GM12878 (cell line): ENCODE measurements at regions of chr1 and their contacts with region 1.

Region 1: GRCh38 chr1:27662707-27663393 is 9.1 kb downstream of the IFI6 start:
- DNase-seq: peak; percentile 78
- ATAC-seq: peak; percentile 65
- H3K4me3 ChIP-seq: peak overlapping the region; percentile 3; the same call in 1 of the 2 replicates
- H3K27ac ChIP-seq: peak overlapping the region; percentile 90
- H3K4me1 ChIP-seq: peaks cover 43% of the 10 kb centered on the region
- H3K27me3 ChIP-seq: no peaks in the 10 kb centered on the region
- CTCF ChIP-seq: peak; percentile 83 to 85 (median 85)
- EP300 ChIP-seq: no peak
- POLR2A ChIP-seq: peak; percentile 73
- RAD21 ChIP-seq: peak; percentile 97

Region 2: DNA sequence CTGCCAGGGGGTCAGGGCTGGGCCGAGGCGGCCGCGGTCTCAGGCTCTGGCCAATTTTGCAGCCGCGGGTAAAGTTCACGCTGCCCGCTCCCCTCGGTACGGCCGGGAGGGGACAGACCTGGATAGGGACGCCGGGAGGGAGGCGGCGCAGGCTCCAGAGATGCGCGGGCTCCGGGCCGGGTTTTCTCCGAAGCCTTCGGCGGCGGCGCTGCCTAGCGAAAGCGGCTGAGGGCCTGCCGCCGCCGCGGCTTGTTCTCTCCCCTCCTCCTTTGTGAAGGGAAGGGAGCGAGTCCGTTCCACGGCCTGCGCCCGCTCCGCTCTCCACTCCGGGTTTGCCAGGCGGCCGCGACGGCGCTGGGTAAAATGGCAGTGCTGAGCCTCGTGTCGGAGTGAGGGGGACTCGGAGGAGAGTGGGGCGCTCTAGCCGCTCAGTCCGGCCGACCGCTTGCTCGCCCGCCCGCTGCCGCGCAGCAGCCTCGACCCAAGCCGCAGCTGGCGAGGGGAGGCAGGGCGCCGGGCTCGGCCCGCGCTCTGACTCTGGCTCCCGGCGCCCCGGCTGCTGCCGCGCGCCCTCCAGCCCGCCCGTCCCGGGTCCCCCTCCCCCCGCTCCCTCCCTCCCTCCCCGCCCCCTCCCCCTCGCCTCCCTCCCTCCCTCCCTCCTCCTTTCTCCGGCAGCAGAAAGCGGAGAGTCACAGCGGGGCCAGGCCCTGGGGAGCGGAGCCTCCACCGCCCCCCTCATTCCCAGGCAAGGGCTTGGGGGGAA is 967.3 kb before region 1 on chr1 and contains the start of gene ARID1A:
- CTCF ChIA-PET with region 1: no interaction called
- POLR2A ChIA-PET with region 1: interaction called, 14 read pairs
- RAD21 ChIA-PET with region 1: no interaction called
- SMC1A ChIA-PET with region 1: no interaction called
- in situ Hi-C with region 1: no loop called
- intact Hi-C with region 1: no loop called
- DNase-seq: peak; percentile 82
- ATAC-seq: peak; percentile 69
- H3K4me3 ChIP-seq: peak within 1 kb of the TSS; percentile 98
- H3K27ac ChIP-seq: peak within 1 kb of the TSS; percentile 98
- H3K4me1 ChIP-seq: peaks cover 13% of the 10 kb centered on the region
- H3K27me3 ChIP-seq: no peaks in the 10 kb centered on the region
- CTCF ChIP-seq: no peak
- EP300 ChIP-seq: peak in 1 of 2 experiments; percentile 74; a peak in 1 of 4 replicates
- POLR2A ChIP-seq: peak; percentile 97
- RAD21 ChIP-seq: peak; percentile 27; the same call in 1 of the 2 replicates
- polyA plus RNA-seq, gene ARID1A: 10.0 to 24.5 TPM

Region 3: DNA sequence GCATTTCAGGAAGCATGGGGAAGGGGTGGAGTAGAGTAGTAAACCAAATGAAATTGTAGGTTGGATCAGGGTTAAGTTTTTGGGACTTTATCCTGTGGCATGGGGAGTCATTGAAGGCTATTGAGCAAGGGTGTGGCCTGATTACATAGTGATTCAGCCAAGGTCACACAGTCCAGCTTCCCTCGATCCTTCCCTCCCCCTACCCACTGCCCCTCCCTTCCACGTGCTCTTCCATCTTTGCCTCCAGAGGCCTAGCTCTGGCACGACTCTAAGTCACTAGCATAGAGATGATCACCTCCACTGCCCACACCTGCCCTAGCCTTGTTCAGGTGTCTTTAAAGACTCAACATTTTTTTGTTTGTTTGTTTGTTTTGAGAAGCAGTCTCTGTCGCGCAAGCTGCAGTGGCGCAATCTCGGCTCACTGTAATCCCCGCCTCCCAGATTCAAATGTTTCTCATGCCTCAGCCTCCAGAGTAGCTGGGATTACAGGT is 470.8 kb before region 1 on chr1:
- CTCF ChIA-PET with region 1: no interaction called
- POLR2A ChIA-PET with region 1: no interaction called
- RAD21 ChIA-PET with region 1: no interaction called
- SMC1A ChIA-PET with region 1: no interaction called
- in situ Hi-C with region 1: no loop called
- intact Hi-C with region 1: no loop called
- DNase-seq: no peak
- ATAC-seq: no peak
- H3K4me3 ChIP-seq: no peak overlapping the region
- H3K27ac ChIP-seq: no peak overlapping the region
- H3K4me1 ChIP-seq: no peaks in the 10 kb centered on the region
- H3K27me3 ChIP-seq: no peaks in the 10 kb centered on the region; a peak in 1 of 4 replicates
- CTCF ChIP-seq: no peak
- EP300 ChIP-seq: no peak
- POLR2A ChIP-seq: no peak
- RAD21 ChIP-seq: no peak

Region 4: DNA sequence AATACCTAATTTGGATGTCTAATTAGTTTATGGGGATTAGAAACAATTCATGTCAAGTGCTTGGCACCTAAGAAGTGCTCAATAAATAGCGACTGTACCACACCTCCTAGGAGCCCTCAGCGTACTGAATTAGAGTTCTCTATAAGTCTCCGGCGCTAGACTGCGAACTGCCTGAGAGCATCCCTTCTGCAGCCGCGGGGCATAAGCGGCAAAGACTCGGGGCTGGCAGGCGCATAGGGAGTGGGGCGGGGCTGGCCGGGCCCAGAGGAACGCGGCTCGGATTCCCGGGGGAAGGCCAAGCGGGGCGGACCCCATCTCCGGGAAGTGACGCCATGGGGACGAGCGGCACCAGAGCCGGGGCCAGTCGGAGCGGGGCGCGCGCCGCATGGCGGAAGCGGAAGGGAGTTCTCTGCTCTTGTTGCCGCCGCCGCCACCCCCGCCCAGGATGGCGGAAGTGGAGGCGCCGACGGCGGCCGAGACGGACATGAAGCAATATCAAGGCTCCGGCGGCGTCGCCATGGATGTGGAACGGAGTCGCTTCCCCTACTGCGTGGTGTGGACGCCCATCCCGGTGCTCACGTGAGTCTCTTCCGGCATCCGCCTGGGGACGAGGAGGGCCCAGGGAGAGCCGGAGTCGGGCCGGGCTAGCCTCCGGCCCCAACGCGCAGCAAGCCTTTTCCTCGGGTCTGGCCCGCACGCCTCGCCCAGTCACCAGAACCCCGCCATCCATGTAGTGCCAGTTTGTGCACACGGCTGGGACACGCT is 340.9 kb before region 1 on chr1 and contains the start of gene TMEM222:
- CTCF ChIA-PET with region 1: no interaction called
- POLR2A ChIA-PET with region 1: interaction called, 3 read pairs
- RAD21 ChIA-PET with region 1: no interaction called
- SMC1A ChIA-PET with region 1: no interaction called
- in situ Hi-C with region 1: no loop called
- intact Hi-C with region 1: loop called (anchors 10 kb)
- DNase-seq: peak; percentile 76
- ATAC-seq: peak; percentile 98
- H3K4me3 ChIP-seq: peak within 1 kb of the TSS; percentile 95
- H3K27ac ChIP-seq: peak within 1 kb of the TSS; percentile 96
- H3K4me1 ChIP-seq: no peaks in the 10 kb centered on the region
- H3K27me3 ChIP-seq: no peaks in the 10 kb centered on the region
- CTCF ChIP-seq: no peak
- EP300 ChIP-seq: peak in 1 of 2 experiments; percentile 63; a peak in 2 of 4 replicates
- POLR2A ChIP-seq: peak; percentile 93
- RAD21 ChIP-seq: no peak
- polyA plus RNA-seq, gene TMEM222: 3.8 to 7.8 TPM

Region 5: DNA sequence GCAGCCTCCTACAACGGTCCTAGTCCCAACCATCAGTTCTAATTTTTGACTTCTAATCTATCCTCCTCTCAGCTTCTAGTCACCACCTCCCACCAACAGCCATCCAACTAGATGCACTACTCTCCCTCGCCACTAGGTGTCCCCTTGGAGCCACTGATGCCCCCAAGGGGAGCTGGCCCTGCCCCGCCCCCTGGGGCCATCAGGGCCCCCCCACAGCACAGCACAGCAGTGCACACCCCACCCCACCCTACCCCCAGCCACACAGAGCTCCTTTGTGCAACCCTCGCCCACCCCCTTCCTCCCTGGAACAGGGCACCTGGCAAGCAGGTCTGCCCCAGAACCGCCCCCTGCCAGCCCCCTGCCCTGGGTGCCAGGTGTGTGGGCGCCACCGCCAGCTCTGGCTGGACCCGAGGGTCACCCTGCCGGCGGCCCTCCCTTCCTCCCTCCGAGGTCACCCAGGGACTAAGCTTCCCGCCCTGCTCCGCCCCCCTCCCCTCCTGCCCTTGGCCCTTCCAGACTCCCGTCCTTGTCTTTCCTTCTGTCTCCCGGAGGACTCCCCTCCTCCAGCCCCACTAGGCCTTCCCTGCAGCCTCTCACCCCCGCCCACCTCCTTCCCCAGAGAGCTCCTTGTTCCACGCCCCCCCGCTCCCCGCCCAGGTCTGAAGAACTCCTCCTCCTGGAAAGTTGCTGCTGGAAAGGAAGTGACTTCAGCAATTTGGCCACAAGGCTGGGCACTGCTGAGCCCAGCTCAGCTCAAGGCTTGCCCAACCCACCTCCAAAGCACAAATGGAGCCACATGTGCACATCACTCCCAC is 105.9 kb before region 1 on chr1:
- CTCF ChIA-PET with region 1: interaction called, 14 read pairs
- POLR2A ChIA-PET with region 1: interaction called, 10 read pairs
- RAD21 ChIA-PET with region 1: interaction called, 16 read pairs
- SMC1A ChIA-PET with region 1: interaction called, 10 read pairs
- in situ Hi-C with region 1: loop called (anchors 5 kb)
- intact Hi-C with region 1: loop called (anchors 2 kb)
- DNase-seq: no peak
- ATAC-seq: peak; percentile 92
- H3K4me3 ChIP-seq: no peak overlapping the region
- H3K27ac ChIP-seq: no peak overlapping the region
- H3K4me1 ChIP-seq: peaks cover 16% of the 10 kb centered on the region
- H3K27me3 ChIP-seq: no peaks in the 10 kb centered on the region
- CTCF ChIP-seq: peak; percentile 85 to 96 (median 86)
- EP300 ChIP-seq: no peak
- POLR2A ChIP-seq: no peak
- RAD21 ChIP-seq: peak; percentile 85

Region 6: GRCh38 chr1:27624467-27625178 is 38.2 kb before region 1 on chr1:
- CTCF ChIA-PET with region 1: interaction called, 97 read pairs
- POLR2A ChIA-PET with region 1: interaction called, 141 read pairs
- RAD21 ChIA-PET with region 1: interaction called, 211 read pairs
- SMC1A ChIA-PET with region 1: interaction called, 88 read pairs
- in situ Hi-C with region 1: no loop called
- intact Hi-C with region 1: no loop called
- DNase-seq: peak; percentile 67
- ATAC-seq: peak; percentile 31
- H3K4me3 ChIP-seq: peak overlapping the region; percentile 93
- H3K27ac ChIP-seq: peak overlapping the region; percentile 85
- H3K4me1 ChIP-seq: peaks cover 63% of the 10 kb centered on the region
- H3K27me3 ChIP-seq: no peaks in the 10 kb centered on the region
- CTCF ChIP-seq: no peak
- EP300 ChIP-seq: no peak
- POLR2A ChIP-seq: no peak
- RAD21 ChIP-seq: no peak

Region 7: GRCh38 chr1:27650539-27651175 is 12.2 kb before region 1 on chr1:
- CTCF ChIA-PET with region 1: interaction called, 41 read pairs
- POLR2A ChIA-PET with region 1: interaction called, 10 read pairs
- RAD21 ChIA-PET with region 1: interaction called, 16 read pairs
- SMC1A ChIA-PET with region 1: interaction called, 17 read pairs
- in situ Hi-C with region 1: no loop called
- intact Hi-C with region 1: no loop called
- DNase-seq: no peak
- ATAC-seq: peak; percentile 38
- H3K4me3 ChIP-seq: no peak overlapping the region
- H3K27ac ChIP-seq: peak overlapping the region; percentile 24
- H3K4me1 ChIP-seq: peaks cover 30% of the 10 kb centered on the region
- H3K27me3 ChIP-seq: no peaks in the 10 kb centered on the region
- CTCF ChIP-seq: no peak
- EP300 ChIP-seq: no peak
- POLR2A ChIP-seq: no peak
- RAD21 ChIP-seq: no peak

Region 8: DNA sequence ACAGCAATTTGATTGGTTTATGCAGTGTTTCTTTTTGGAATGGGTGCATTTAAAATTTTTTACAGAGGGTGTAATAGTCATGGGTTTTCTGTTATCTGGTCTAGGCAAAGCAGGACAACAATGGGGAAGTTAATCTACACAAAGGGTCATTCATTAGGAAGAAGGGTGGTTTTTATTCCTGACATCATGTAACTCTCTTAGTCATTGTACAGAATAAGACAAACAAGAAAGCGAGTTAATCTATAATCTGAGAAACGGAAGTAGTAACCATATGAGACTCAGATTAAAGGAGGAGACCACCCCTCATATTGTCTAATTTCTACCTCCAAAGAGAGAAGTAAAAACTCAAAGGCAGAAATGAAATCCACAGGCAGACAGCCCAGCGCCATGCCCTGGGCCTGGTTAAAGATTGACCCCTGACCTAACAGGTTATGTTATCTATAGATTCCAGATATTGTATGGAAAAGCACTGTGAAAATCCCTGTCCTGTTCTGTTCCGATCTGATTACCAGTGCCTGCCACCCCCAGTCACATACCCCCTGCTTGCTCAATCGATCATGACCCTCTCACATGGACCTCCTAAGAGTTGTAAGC is 19.6 kb after region 1 on chr1:
- CTCF ChIA-PET with region 1: no interaction called
- POLR2A ChIA-PET with region 1: no interaction called
- RAD21 ChIA-PET with region 1: no interaction called
- SMC1A ChIA-PET with region 1: no interaction called
- in situ Hi-C with region 1: no loop called
- intact Hi-C with region 1: no loop called
- DNase-seq: no peak
- ATAC-seq: peak; percentile 75
- H3K4me3 ChIP-seq: no peak overlapping the region
- H3K27ac ChIP-seq: no peak overlapping the region
- H3K4me1 ChIP-seq: no peaks in the 10 kb centered on the region
- H3K27me3 ChIP-seq: no peaks in the 10 kb centered on the region
- CTCF ChIP-seq: no peak
- EP300 ChIP-seq: no peak
- POLR2A ChIP-seq: no peak
- RAD21 ChIP-seq: no peak

Region 9: GRCh38 chr1:27710574-27710973 is 47.7 kb after region 1 on chr1:
- CTCF ChIA-PET with region 1: no interaction called
- POLR2A ChIA-PET with region 1: no interaction called
- RAD21 ChIA-PET with region 1: no interaction called
- SMC1A ChIA-PET with region 1: no interaction called
- in situ Hi-C with region 1: no loop called
- intact Hi-C with region 1: no loop called
- DNase-seq: no peak
- ATAC-seq: no peak
- H3K4me3 ChIP-seq: no peak overlapping the region
- H3K27ac ChIP-seq: no peak overlapping the region
- H3K4me1 ChIP-seq: no peaks in the 10 kb centered on the region
- H3K27me3 ChIP-seq: no peaks in the 10 kb centered on the region; a peak in 1 of 4 replicates
- CTCF ChIP-seq: no peak
- EP300 ChIP-seq: no peak
- POLR2A ChIP-seq: no peak
- RAD21 ChIP-seq: no peak

Region 10: GRCh38 chr1:28067523-28068090 is 404.8 kb after region 1 on chr1:
- CTCF ChIA-PET with region 1: no interaction called
- POLR2A ChIA-PET with region 1: no interaction called
- RAD21 ChIA-PET with region 1: no interaction called
- SMC1A ChIA-PET with region 1: no interaction called
- in situ Hi-C with region 1: no loop called
- intact Hi-C with region 1: no loop called
- DNase-seq: no peak
- ATAC-seq: no peak
- H3K4me3 ChIP-seq: no peak overlapping the region
- H3K27ac ChIP-seq: no peak overlapping the region
- H3K4me1 ChIP-seq: peaks cover 24% of the 10 kb centered on the region
- H3K27me3 ChIP-seq: no peaks in the 10 kb centered on the region
- CTCF ChIP-seq: no peak
- EP300 ChIP-seq: no peak
- POLR2A ChIP-seq: no peak
- RAD21 ChIP-seq: no peak